CD14-positive monocyte (primary cell): ENCODE measurements at regions of chr12 and their contacts with region 1.

Region 1: DNA sequence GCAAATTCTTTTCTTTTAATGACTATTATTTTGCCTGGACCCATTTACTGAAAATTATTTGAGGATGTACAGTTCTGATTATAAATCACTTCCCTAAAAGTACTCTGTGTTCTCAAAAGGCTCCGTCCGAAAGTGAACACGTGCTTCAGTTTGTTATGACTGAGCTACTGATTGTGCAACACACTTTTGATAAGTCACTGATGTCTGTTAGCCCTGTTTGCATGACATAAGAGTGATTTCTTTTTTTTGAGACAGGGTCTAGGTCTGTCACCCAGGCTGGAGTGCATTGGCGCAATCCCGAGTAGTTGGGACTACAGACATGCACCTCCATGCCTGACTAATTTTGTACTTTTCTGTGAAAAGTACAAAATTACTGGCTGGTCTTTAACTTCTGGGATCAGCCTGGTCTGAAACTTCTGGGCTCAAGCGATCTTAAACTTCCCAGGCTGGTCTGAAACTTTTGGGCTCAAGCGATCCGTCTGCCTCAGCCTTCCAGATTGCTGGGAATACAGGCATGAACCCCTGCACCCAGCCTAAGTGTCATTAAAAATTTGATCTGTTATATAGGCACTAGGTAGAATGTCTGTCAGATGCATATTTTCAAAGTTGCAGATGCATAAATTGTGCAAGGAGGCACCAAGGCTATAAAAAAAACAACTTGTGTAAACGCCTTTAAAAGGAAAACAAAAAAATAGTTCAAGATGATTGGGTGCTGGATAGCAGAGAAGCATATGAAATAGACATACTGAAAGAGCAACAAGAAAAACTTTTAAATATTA is 111.5 kb downstream of the SRGAP1 start:
- DNase-seq: peak; percentile 94 to 99 (median 99)
- H3K4me3 ChIP-seq: peak overlapping the region in 1 of 3 experiments; percentile 35
- H3K4me3 Mint-ChIP-seq: peak overlapping the region; percentile 37 to 62
- H3K27ac ChIP-seq: peak overlapping the region; percentile 19 to 64
- H3K27ac Mint-ChIP-seq: peak overlapping the region; percentile 82 to 91 (median 88)
- H3K4me1 ChIP-seq: peaks cover 20 to 21% of the 10 kb centered on the region in 2 donors
- H3K4me1 Mint-ChIP-seq: peaks cover 24% of the 10 kb centered on the region
- H3K27me3 ChIP-seq: no peaks in the 10 kb centered on the region
- H3K27me3 Mint-ChIP-seq: peaks cover 0 to 4% (median 0%) of the 10 kb centered on the region in 3 donors
- CTCF ChIP-seq: no peak

Region 2: DNA sequence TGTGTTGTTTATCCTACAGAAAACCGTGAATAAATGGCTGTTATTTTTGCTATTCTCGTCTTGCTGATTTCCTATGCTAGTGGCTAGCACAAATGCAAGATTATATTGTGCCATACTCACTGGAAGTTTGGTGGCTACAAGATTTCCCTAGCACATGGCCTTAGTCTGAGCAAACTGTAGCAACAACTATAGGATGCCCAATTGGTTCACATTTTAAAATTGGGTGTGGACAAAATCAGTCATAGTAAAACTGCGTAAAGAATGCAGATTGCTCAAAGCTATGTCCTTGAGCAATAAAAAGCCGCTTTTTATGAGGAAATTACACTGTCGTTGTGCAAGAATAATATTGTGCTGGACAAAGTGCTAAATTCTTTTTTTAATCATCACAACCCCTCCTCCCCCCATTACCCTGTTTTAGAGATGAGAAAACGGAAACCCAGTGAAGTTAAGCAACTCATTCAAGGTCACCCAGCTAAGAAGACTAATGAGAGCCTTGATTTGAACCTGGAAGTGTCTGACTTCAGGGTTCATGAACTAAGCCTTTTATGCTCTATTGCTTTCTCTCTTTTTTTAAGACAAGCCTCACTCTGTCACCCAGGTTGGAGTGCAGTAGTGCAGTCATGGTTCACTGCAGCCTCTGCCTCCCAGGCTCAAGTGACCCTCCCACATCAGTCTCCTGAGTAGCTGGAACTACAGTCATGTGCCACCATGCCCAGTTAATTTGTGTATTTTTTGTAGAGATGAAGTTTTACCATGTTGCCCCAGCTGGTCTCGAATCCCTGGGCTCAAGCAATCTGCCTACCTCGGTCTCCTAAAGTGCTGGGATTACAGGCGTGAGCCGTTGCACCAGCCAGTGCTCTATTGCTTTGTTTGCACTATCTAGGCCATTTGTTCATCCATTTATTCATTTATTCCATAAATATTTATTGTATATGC is 37.9 kb before region 1 on chr12:
- intact Hi-C with region 1: loop called (anchors 2 to 5 kb)
- DNase-seq: peak; percentile 95 to 100 (median 97)
- H3K4me3 ChIP-seq: peak overlapping the region in 1 of 3 experiments; percentile 35
- H3K4me3 Mint-ChIP-seq: peak overlapping the region; percentile 64 to 82
- H3K27ac ChIP-seq: peak overlapping the region; percentile 58 to 84
- H3K27ac Mint-ChIP-seq: peak overlapping the region; percentile 92 to 99 (median 98)
- H3K4me1 ChIP-seq: peaks cover 31 to 36% of the 10 kb centered on the region in 2 donors
- H3K4me1 Mint-ChIP-seq: peaks cover 40% of the 10 kb centered on the region
- H3K27me3 ChIP-seq: no peaks in the 10 kb centered on the region
- H3K27me3 Mint-ChIP-seq: peaks cover 0 to 6% (median under 1%) of the 10 kb centered on the region in 3 donors
- CTCF ChIP-seq: no peak

Region 3: GRCh38 chr12:63994704-63995103 is 38.7 kb after region 1 on chr12:
- intact Hi-C with region 1: no loop called
- DNase-seq: no peak
- H3K4me3 ChIP-seq: no peak overlapping the region
- H3K4me3 Mint-ChIP-seq: no peak overlapping the region
- H3K27ac ChIP-seq: no peak overlapping the region
- H3K27ac Mint-ChIP-seq: no peak overlapping the region
- H3K4me1 ChIP-seq: no peaks in the 10 kb centered on the region
- H3K4me1 Mint-ChIP-seq: no peaks in the 10 kb centered on the region
- H3K27me3 ChIP-seq: no peaks in the 10 kb centered on the region
- H3K27me3 Mint-ChIP-seq: peaks cover 0 to 4% (median 2%) of the 10 kb centered on the region in 3 donors
- CTCF ChIP-seq: no peak

Region 4: DNA sequence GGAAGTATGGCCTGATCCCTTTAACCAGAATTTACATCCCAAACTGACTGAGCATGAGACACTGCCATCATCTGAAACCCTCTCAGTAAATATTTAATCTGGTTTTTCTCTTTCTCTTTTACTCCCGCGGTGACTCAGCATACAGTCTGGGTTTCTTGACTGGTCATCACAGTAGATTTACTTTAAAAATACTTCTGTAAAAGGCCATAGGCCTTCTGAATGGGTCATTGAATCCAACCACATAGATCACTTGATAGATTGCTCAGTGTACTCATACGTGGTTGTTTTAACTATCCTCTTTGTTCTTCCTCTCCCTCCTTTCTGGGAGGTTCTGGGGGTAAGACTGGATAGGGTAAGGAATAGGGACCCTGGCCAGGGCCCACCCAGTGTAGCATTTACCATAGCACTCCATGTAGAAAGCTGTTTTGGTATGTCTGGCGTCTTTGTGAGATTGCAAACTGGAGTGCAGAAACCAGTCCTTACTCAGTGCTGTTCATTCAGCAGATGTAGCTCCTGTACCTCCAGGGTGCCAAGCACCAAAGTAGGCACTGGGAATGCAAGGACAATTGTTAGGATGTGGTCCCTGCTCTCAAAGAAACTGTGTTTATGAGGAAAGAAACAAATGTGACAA is 54.2 kb after region 1 on chr12:
- intact Hi-C with region 1: no loop called
- DNase-seq: no peak
- H3K4me3 ChIP-seq: no peak overlapping the region
- H3K4me3 Mint-ChIP-seq: no peak overlapping the region
- H3K27ac ChIP-seq: no peak overlapping the region
- H3K27ac Mint-ChIP-seq: no peak overlapping the region
- H3K4me1 ChIP-seq: no peaks in the 10 kb centered on the region
- H3K4me1 Mint-ChIP-seq: no peaks in the 10 kb centered on the region
- H3K27me3 ChIP-seq: no peaks in the 10 kb centered on the region
- H3K27me3 Mint-ChIP-seq: no peaks in the 10 kb centered on the region
- CTCF ChIP-seq: no peak